Left colon (tissue), 2 donors: ENCODE measurements at regions of chr1 and their contacts with region 1.

Region 1: GRCh38 chr1:27662707-27663393 is 9.1 kb downstream of the IFI6 start:
- DNase-seq: peak; percentile 57 to 87
- ATAC-seq: peak; percentile 62

Region 2: GRCh38 chr1:27609210-27609555 is 53.7 kb before region 1 on chr1:
- intact Hi-C with region 1: loop called (anchors 2 to 5 kb)
- DNase-seq: no peak
- ATAC-seq: no peak